ENCODE measurements at regions of chr10 and their contacts with region 1.

Region 1: DNA sequence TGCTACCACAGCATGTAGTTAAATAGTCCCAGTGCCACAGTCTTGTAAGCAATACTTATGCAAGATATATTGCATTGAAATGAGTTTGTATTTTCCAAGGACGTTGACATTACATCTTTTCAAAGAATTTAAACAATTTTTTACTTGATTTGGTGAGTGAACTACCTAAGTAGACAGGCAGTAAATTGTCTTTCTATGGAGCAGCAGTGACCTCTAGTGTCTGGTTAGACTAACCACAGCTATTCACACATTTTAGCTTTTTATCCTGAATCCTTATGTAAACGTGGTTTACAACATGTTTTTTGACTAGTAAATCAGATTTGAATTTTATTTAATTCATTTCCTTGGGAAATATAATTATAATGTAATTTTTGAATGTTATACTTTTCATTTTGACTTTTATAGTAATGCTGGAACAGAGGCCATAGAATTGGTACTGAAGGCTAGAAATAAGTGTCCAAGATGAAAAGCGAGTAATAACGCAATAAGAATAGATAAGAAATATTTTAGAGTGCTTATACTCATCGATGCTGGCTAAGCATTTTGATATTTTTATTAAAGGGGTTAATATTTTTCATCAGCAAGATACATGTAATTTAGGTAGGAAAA is 5.6 kb downstream of the LRRTM3 start:
- DNase-seq: no peak
- ATAC-seq: peak; percentile 50
- H3K4me3 Mint-ChIP-seq: no peak overlapping the region
- H3K27ac Mint-ChIP-seq: no peak overlapping the region
- H3K4me1 Mint-ChIP-seq: peaks cover 44% of the 10 kb centered on the region
- H3K27me3 Mint-ChIP-seq: peaks cover 30% of the 10 kb centered on the region
- CTCF ChIP-seq: peak; percentile 62

Region 2: GRCh38 chr10:66869635-66870034 is 61.8 kb before region 1 on chr10:
- CTCF ChIA-PET with region 1: no interaction called
- POLR2A ChIA-PET with region 1: no interaction called
- DNase-seq: no peak
- ATAC-seq: no peak
- H3K4me3 Mint-ChIP-seq: no peak overlapping the region
- H3K27ac Mint-ChIP-seq: no peak overlapping the region
- H3K4me1 Mint-ChIP-seq: peaks cover 7% of the 10 kb centered on the region
- H3K27me3 Mint-ChIP-seq: no peaks in the 10 kb centered on the region
- CTCF ChIP-seq: no peak

Region 3: DNA sequence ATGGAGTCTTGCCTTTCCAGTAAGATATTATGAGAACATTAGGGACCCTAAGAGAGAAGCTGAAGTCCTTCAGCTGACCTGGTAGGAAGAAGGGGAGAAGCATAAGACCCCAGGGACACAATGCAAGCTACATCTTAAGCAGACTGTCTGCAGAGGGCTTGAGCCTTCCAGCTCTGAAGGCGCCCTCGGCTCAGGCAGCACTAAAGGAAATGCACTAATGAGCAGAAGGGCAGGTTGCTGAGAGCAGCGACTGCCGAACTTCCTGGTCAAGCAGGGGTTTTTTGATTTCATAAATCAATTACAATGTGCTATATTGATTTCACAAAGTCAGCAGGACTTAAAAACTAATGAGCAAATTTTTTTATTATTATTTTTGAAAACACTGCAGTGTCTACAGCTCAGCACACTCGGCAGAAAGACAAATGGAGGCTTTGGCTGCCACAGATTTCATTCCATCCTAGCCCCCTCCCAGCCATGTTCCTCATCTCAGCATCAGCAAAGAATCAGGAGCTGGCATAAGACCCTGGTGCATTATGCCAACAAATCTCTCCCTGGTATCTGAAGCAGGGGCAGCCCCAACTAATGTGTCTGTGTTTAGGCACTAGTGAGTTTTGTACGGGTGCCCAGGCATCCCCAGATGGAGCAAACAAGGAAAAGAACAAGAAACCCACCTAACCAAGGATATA is 51.5 kb after region 1 on chr10:
- CTCF ChIA-PET with region 1: no interaction called
- POLR2A ChIA-PET with region 1: no interaction called
- DNase-seq: no peak
- ATAC-seq: peak; percentile 78
- H3K4me3 Mint-ChIP-seq: no peak overlapping the region
- H3K27ac Mint-ChIP-seq: no peak overlapping the region
- H3K4me1 Mint-ChIP-seq: no peaks in the 10 kb centered on the region
- H3K27me3 Mint-ChIP-seq: no peaks in the 10 kb centered on the region
- CTCF ChIP-seq: no peak

Region 4: DNA sequence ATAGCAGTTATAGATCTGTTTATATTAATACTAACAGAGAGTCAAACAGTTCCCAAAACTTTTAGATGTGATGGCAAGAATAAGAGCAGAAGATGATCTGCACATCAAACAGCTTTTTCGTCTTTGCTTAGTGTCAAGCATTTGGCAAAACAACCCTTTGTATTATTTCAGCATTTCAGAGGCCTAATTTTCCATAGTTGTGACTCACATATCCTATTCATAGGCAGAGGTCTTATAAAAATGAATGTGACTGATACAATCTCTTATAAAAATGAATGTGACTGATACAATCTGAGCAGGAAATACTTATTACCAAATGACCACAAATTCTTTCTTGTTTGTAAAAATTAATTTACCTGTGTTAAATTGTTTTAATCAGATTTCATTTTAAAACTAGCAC is 65.6 kb after region 1 on chr10:
- CTCF ChIA-PET with region 1: no interaction called
- POLR2A ChIA-PET with region 1: no interaction called
- DNase-seq: no peak
- ATAC-seq: no peak
- H3K4me3 Mint-ChIP-seq: no peak overlapping the region
- H3K27ac Mint-ChIP-seq: no peak overlapping the region
- H3K4me1 Mint-ChIP-seq: no peaks in the 10 kb centered on the region
- H3K27me3 Mint-ChIP-seq: no peaks in the 10 kb centered on the region
- CTCF ChIP-seq: no peak

Region 5: GRCh38 chr10:67520924-67521520 is 589.6 kb after region 1 on chr10:
- CTCF ChIA-PET with region 1: interaction called, 12 read pairs
- POLR2A ChIA-PET with region 1: no interaction called
- DNase-seq: no peak
- ATAC-seq: peak; percentile 86
- H3K4me3 Mint-ChIP-seq: no peak overlapping the region
- H3K27ac Mint-ChIP-seq: no peak overlapping the region
- H3K4me1 Mint-ChIP-seq: no peaks in the 10 kb centered on the region
- H3K27me3 Mint-ChIP-seq: no peaks in the 10 kb centered on the region
- CTCF ChIP-seq: peak; percentile 71